Activated B cell treated with CpG ODN at 0.5 μM for 24 hours (primary cell): ENCODE measurements at regions of chr11 and their contacts with region 1.

Region 1: GRCh38 chr11:65053827-65054508 is 4.4 kb downstream of the NAALADL1 start:
- DNase-seq: no peak
- ATAC-seq: peak; percentile 37
- H3K4me3 Mint-ChIP-seq: peak overlapping the region; percentile 70
- H3K27ac Mint-ChIP-seq: peak overlapping the region; percentile 69
- H3K4me1 Mint-ChIP-seq: peaks cover 17% of the 10 kb centered on the region
- H3K27me3 Mint-ChIP-seq: no peaks in the 10 kb centered on the region
- CTCF ChIP-seq: no peak

Region 2: GRCh38 chr11:65078151-65078550 is 24.2 kb after region 1 on chr11:
- CTCF ChIA-PET with region 1: no interaction called
- POLR2A ChIA-PET with region 1: interaction called, 16 read pairs
- intact Hi-C with region 1: no loop called
- DNase-seq: peak; percentile 51
- ATAC-seq: peak; percentile 99
- H3K4me3 Mint-ChIP-seq: no peak overlapping the region
- H3K27ac Mint-ChIP-seq: peak overlapping the region; percentile 41
- H3K4me1 Mint-ChIP-seq: peaks cover 10% of the 10 kb centered on the region
- H3K27me3 Mint-ChIP-seq: no peaks in the 10 kb centered on the region
- CTCF ChIP-seq: no peak

Region 3: DNA sequence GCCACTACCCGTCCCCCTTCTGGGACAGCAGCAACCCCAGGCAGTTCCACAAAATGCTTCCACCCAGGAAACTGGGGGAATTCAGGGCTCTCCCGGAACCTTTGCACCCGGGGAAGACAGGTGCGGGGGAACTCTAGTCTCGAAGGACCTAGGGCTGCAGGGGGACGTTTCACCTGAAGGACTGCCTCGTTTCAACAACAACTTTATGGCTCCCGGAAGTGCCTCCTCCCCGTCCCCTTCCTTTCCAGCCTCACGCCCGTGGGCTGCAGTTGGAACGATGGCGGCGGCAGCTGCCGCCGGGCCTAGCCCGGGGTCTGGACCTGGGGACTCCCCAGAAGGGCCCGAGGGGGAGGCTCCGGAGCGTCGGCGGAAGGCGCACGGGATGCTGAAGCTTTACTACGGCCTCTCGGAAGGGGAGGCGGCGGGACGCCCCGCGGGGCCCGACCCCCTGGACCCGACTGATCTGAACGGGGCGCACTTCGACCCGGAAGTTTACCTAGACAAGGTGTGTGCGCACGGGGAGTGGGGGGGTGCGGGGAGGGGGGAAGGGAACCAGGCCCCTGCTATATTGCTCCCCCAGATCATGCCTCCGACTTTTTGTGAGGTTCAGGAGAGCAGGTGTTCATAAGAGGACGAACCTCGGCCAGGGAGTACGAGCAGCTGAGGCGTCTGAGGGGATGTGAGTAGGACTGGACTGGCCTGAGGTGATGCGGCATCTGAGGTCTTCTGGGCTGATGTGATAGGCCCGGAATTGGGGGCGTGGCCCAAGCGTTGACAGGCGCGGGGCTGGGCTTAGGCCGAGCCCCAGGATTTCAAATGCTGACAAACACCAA is 42.2 kb after region 1 on chr11 and contains the start of gene VPS51:
- CTCF ChIA-PET with region 1: no interaction called
- POLR2A ChIA-PET with region 1: no interaction called
- intact Hi-C with region 1: no loop called
- DNase-seq: peak; percentile 74
- ATAC-seq: peak; percentile 92
- H3K4me3 Mint-ChIP-seq: peak within 1 kb of the TSS; percentile 91
- H3K27ac Mint-ChIP-seq: peak within 1 kb of the TSS; percentile 88
- H3K4me1 Mint-ChIP-seq: peaks cover 18% of the 10 kb centered on the region
- H3K27me3 Mint-ChIP-seq: no peaks in the 10 kb centered on the region
- CTCF ChIP-seq: no peak
- total RNA-seq, gene VPS51: 224 and 243 TPM in 2 replicates